MCF 10A (cell line): ENCODE measurements at regions of chr10 and their contacts with region 1.

Region 1: DNA sequence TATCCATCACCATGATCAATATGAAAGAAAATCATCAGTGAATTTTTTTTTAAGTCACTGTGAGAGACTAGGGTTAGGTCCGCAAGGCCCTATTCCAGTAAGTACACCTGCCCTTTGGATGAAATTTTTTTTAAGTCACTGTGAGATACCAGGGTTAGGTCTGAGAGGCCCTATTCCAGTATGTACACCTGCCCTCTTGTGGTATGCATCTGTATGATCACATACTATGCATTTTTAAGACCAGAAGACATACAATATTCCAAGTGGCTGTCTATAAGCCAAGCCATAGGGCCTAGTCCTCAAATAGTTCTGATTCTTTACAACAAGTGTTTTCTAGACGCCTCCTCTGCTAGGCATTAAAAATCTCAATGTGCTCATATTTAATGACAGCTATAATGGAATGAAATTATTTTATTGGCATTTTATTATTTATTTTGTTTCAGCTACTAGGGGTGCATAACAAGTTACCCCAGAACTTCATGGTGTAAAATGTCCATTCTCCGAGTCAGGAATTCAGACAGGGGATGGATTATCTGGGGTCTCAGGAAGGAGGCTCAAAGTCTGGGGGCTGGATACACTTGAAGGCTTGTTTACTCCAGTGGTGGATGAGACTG is 53.1 kb downstream of the TEX36 start:
- DNase-seq: peak; percentile 63
- H3K4me3 Mint-ChIP-seq: no peak overlapping the region
- H3K27ac Mint-ChIP-seq: no peak overlapping the region
- H3K4me1 Mint-ChIP-seq: no peaks in the 10 kb centered on the region
- H3K27me3 Mint-ChIP-seq: peaks cover 57% of the 10 kb centered on the region
- CTCF ChIP-seq: peak; percentile 49

Region 2: DNA sequence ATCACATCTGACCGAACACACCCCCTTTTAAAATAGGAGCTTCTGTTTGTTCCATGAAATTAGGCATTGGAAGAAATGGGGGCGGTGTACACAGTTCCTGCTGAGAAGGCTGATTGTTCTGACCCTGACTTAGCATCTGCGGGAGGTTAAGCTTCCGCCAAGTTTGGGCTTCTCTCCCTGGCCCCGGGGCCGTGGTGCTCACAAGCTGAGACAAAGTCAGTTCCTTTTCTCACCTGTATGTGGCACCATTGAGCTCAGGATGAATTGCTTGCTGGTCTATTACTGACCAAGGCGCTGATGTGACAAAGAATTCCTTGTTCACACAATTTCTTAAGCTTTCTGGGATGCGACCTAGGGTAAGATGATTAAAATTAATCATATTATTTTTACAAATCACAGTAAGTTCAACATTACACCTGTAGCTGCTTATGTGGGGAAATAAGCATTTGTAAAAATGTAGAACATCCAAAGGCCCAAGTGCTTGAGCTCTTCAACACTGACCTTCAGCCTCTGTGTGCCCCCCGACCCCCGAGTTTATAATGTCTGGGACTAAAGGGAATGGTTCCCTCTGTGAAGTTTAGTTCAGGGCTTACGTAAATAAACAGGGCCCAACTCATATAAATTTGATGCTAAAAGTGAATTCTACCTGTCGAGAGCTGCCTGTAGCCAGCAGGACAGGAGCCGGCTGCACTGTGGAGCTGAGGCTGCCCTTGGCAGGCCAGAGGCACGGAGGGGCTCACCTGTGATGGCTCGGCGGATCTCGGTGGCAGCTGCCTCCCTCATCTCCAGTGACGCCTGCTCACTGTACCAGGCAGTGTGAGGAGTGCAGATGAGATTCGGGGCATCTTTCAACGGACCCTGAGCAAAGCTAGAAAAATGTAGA is 637.2 kb before region 1 on chr10:
- CTCF ChIA-PET with region 1: interaction called, 3 read pairs
- POLR2A ChIA-PET with region 1: no interaction called
- intact Hi-C with region 1: loop called (anchors 2 kb)
- DNase-seq: peak; percentile 68
- H3K4me3 Mint-ChIP-seq: no peak overlapping the region
- H3K27ac Mint-ChIP-seq: no peak overlapping the region
- H3K4me1 Mint-ChIP-seq: no peaks in the 10 kb centered on the region
- H3K27me3 Mint-ChIP-seq: no peaks in the 10 kb centered on the region
- CTCF ChIP-seq: peak; percentile 50

Region 3: DNA sequence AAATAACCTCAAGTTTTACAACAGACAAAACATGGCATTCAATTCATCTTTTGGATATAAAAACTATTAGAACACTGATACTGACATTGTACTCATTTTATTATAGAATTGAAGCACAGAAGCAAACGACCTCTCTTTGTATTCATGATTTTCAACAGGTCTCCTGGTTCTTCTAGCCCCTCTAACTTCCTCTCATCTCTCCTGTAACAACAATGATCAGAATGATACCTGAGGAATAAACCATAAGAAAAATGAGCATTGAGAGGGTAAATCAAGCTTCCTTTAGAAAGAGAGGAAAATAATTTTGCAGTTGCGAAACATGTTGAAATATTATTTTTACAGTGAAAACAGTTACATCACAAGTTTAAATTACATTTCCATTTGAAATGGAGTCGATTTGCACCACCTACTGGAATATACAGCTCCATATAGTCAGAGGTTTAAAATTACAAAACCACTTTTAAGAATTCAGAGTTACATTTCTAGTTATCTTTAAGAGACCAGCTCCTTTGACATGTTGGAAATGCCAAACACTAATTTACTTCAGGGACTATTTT is 70.6 kb after region 1 on chr10:
- CTCF ChIA-PET with region 1: interaction called, 3 read pairs
- POLR2A ChIA-PET with region 1: no interaction called
- intact Hi-C with region 1: loop called (anchors 5 kb)
- DNase-seq: peak; percentile 40
- H3K4me3 Mint-ChIP-seq: no peak overlapping the region
- H3K27ac Mint-ChIP-seq: no peak overlapping the region
- H3K4me1 Mint-ChIP-seq: no peaks in the 10 kb centered on the region
- H3K27me3 Mint-ChIP-seq: no peaks in the 10 kb centered on the region
- CTCF ChIP-seq: peak; percentile 33

Region 4: GRCh38 chr10:126628746-126629145 is 998.9 kb after region 1 on chr10:
- CTCF ChIA-PET with region 1: no interaction called
- POLR2A ChIA-PET with region 1: no interaction called
- intact Hi-C with region 1: no loop called
- DNase-seq: no peak
- H3K4me3 Mint-ChIP-seq: no peak overlapping the region
- H3K27ac Mint-ChIP-seq: no peak overlapping the region
- H3K4me1 Mint-ChIP-seq: no peaks in the 10 kb centered on the region
- H3K27me3 Mint-ChIP-seq: peaks cover 20% of the 10 kb centered on the region
- CTCF ChIP-seq: no peak